PC-9 (cell line): ENCODE measurements at regions of chr3 and their contacts with region 1.

Region 1: DNA sequence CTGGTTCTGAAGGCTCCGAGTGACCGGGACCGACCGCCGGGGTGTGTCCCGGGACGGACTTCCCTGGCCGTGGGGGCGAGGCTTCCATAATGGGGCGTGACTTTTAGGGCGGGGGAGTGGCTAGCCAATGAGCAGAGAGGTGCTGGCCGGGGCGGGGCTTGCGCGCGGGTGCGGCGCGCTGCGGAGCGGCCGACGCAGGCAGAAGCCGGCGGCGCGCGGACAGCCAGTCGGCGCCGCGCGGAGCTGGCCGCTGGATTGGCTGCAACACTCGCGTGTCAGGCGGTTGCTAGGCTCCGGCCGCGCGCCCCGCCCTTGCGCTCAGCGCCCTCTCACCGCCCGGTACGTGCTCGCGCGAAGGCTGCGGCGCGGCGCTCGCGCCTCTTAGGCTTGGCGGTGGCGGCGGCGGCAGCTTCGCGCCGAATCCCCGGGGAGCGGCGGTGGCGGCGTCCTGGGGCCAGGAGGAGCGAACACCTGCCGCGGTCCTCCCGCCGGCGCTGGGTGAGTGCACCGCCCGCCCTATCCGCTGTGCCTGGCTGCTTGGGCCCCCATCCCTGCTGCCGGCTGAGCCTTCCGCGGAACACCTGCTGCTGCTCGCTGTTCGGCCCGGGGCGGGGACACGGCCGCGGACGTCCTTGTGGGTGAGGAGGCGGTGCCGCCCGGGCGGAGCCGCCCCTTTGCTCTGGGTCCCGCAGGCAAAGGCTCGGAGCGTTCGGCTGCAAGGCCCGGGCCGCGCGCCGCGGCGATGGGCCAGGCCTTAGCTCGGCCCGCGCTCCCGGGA is at the start of gene DAG1:
- DNase-seq: peak; percentile 83 to 98
- H3K4me3 ChIP-seq: peak within 1 kb of the TSS; percentile 98
- H3K27ac ChIP-seq: peak within 1 kb of the TSS; percentile 76
- H3K4me1 ChIP-seq: peaks cover 45% of the 10 kb centered on the region
- H3K27me3 ChIP-seq: no peaks in the 10 kb centered on the region
- CTCF ChIP-seq: no peak
- total RNA-seq, gene DAG1: 156 and 206 TPM in 2 replicates

Region 2: GRCh38 chr3:49339945-49340800 is 130.0 kb before region 1 on chr3 and contains the start of gene USP4:
- CTCF ChIA-PET with region 1: no interaction called
- POLR2A ChIA-PET with region 1: interaction called, 16 read pairs
- intact Hi-C with region 1: no loop called
- DNase-seq: peak; percentile 81 to 90
- H3K4me3 ChIP-seq: peak within 1 kb of the TSS; percentile 88
- H3K27ac ChIP-seq: peak within 1 kb of the TSS; percentile 77
- H3K4me1 ChIP-seq: peaks cover 8% of the 10 kb centered on the region; the same call in 1 of the 2 replicates
- H3K27me3 ChIP-seq: no peaks in the 10 kb centered on the region
- CTCF ChIP-seq: peak; percentile 42; the same call in 1 of the 2 replicates
- total RNA-seq, gene USP4: 39.8 and 42.9 TPM in 2 replicates

Region 3: GRCh38 chr3:49539659-49540560 is 69.8 kb after region 1 on chr3:
- CTCF ChIA-PET with region 1: interaction called, 13 read pairs
- POLR2A ChIA-PET with region 1: interaction called, 7 read pairs
- intact Hi-C with region 1: no loop called
- DNase-seq: peak; percentile 75 to 96
- H3K4me3 ChIP-seq: peak overlapping the region; percentile 54; the same call in 1 of the 2 replicates
- H3K27ac ChIP-seq: no peak overlapping the region
- H3K4me1 ChIP-seq: no peaks in the 10 kb centered on the region
- H3K27me3 ChIP-seq: peaks cover 23% of the 10 kb centered on the region; the same call in 1 of the 2 replicates
- CTCF ChIP-seq: peak; percentile 89

Region 4: DNA sequence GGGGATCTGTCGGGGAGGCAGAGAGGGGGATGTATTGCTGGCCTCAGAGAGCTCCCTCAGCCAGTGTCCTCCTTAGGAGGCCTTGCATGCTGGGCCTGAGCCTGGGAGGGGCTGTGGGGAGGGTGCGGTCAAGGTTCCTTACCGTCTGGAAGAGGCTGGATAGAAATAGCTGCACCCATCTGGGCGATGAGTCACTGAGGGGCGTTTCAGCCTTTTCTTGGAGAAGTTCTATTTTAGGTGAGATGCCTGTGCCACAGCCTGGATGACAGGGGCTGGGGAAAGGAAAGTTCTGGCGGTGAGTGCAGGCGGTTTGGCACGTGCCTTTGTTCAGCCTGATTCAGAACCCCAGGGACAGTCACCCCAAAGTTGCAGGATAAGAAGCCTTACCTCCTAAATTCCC is 168.3 kb after region 1 on chr3:
- CTCF ChIA-PET with region 1: no interaction called
- POLR2A ChIA-PET with region 1: interaction called, 11 read pairs
- intact Hi-C with region 1: no loop called
- DNase-seq: peak; percentile 78 to 81
- H3K4me3 ChIP-seq: no peak overlapping the region
- H3K27ac ChIP-seq: no peak overlapping the region
- H3K4me1 ChIP-seq: peaks cover 27% of the 10 kb centered on the region
- H3K27me3 ChIP-seq: no peaks in the 10 kb centered on the region
- CTCF ChIP-seq: no peak

Region 5: GRCh38 chr3:50163572-50164455 is 693.7 kb after region 1 on chr3:
- CTCF ChIA-PET with region 1: no interaction called
- POLR2A ChIA-PET with region 1: interaction called, 24 read pairs
- intact Hi-C with region 1: no loop called
- DNase-seq: peak; percentile 85 to 90
- H3K4me3 ChIP-seq: no peak overlapping the region
- H3K27ac ChIP-seq: no peak overlapping the region
- H3K4me1 ChIP-seq: peaks cover 38% of the 10 kb centered on the region
- H3K27me3 ChIP-seq: no peaks in the 10 kb centered on the region
- CTCF ChIP-seq: no peak